BJ (cell line): ENCODE measurements at regions of chr15 and their contacts with region 1.

Region 1: GRCh38 chr15:74901612-74902082 is 5.0 kb downstream of the FAM219B start:
- DNase-seq: no peak
- H3K4me3 ChIP-seq: no peak overlapping the region
- H3K27me3 ChIP-seq: no peaks in the 10 kb centered on the region
- CTCF ChIP-seq: peak; percentile 84

Region 2: GRCh38 chr15:74752491-74753020 is 149.1 kb before region 1 on chr15:
- CTCF ChIA-PET with region 1: no interaction called
- POLR2A ChIA-PET with region 1: no interaction called
- DNase-seq: peak; percentile 15
- H3K4me3 ChIP-seq: no peak overlapping the region
- H3K27me3 ChIP-seq: peaks cover 11% of the 10 kb centered on the region
- CTCF ChIP-seq: no peak

Region 3: GRCh38 chr15:74884428-74885223 is 17.0 kb before region 1 on chr15:
- CTCF ChIA-PET with region 1: interaction called, 21 read pairs
- POLR2A ChIA-PET with region 1: interaction called, 3 read pairs
- DNase-seq: no peak
- H3K4me3 ChIP-seq: no peak overlapping the region
- H3K27me3 ChIP-seq: no peaks in the 10 kb centered on the region
- CTCF ChIP-seq: no peak

Region 4: GRCh38 chr15:74889883-74890664 is 11.6 kb before region 1 on chr15 and contains the start of gene MPI:
- CTCF ChIA-PET with region 1: interaction called, 23 read pairs
- POLR2A ChIA-PET with region 1: interaction called, 3 read pairs
- DNase-seq: no peak
- H3K4me3 ChIP-seq: peak within 1 kb of the TSS; percentile 99
- H3K27me3 ChIP-seq: no peaks in the 10 kb centered on the region
- CTCF ChIP-seq: no peak
- polyA plus RNA-seq, gene MPI: 73.9 and 105 TPM in 2 replicates

Region 5: GRCh38 chr15:74913041-74913440 is 11.4 kb after region 1 on chr15:
- CTCF ChIA-PET with region 1: interaction called, 34 read pairs
- POLR2A ChIA-PET with region 1: no interaction called
- DNase-seq: no peak
- H3K4me3 ChIP-seq: no peak overlapping the region
- H3K27me3 ChIP-seq: no peaks in the 10 kb centered on the region
- CTCF ChIP-seq: no peak